Endothelial cell of umbilical vein (primary cell): ENCODE measurements at regions of chr3 and their contacts with region 1.

Region 1: DNA sequence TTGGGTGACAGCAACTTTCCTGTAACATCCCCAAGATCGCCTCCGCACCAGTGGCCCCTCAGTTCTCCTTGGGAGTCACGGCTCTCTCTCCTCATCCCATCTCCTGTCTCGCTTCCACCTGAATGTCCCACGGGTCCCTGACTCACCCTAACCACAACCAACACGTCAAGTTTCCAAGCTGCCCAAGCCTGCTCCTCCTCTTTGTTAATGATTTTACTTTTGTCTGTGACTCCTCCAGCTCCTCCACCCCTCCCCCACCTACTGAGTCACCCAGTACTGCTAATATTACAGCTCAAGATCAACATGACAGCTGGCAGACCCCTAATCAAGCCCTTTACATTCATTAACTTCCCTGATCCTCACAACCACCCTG is 39.3 kb downstream of the BDH1 start:
- DNase-seq: peak; percentile 34
- H3K4me3 ChIP-seq: no peak overlapping the region
- H3K27ac ChIP-seq: peak overlapping the region; percentile 27
- H3K4me1 ChIP-seq: peaks cover 6% of the 10 kb centered on the region
- H3K27me3 ChIP-seq: no peaks in the 10 kb centered on the region
- CTCF ChIP-seq: no peak
- POLR2A ChIP-seq: no peak

Region 2: GRCh38 chr3:197002701-197003454 is 513.6 kb before region 1 on chr3:
- CTCF ChIA-PET with region 1: interaction called, 3 read pairs
- POLR2A ChIA-PET with region 1: no interaction called
- dilution Hi-C with region 1: no loop called
- intact Hi-C with region 1: loop called (anchors 10 kb)
- DNase-seq: peak; percentile 47
- H3K4me3 ChIP-seq: peak overlapping the region; percentile 17 to 61 (median 24)
- H3K27ac ChIP-seq: no peak overlapping the region
- H3K4me1 ChIP-seq: peaks cover 2% of the 10 kb centered on the region
- H3K27me3 ChIP-seq: no peaks in the 10 kb centered on the region
- CTCF ChIP-seq: peak; percentile 62 to 65
- POLR2A ChIP-seq: peak; percentile 38